Activated naive CD4-positive, alpha-beta T cell treated with anti-CD3 and anti-CD28 coated beads for 36 hours (primary cell): ENCODE measurements at regions of chr3 and their contacts with region 1.

Region 1: DNA sequence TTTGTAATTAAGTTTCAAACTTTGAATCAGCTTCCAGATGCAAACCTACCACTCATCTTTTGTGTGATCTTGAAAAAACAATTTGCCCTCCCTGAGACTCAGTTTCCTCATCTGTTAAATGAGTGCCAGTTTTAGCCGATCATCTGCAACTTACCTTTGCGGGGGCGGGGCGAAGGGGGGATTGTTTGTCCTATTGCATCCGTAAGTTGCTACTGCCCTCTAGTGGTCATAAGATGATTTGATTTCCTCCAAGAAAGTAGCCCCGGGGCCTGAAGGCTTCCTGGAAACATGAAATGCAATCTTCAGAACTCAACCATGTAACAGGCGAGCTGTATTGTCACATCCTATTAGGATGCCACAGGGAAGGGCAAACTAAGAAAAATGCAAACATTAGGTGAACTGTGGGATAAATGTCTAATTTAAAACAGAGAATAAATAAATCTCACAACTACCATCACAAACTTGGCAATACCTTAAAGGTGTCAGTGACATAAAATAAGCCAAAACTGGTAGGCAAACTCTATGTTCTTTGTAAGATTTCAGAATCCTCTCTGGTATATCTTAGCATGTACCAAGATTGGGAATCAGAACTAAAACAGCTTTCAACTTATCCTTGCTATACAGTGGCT is 63.5 kb upstream of the CLDN18 start:
- DNase-seq: peak; percentile 51
- H3K4me3 Mint-ChIP-seq: no peak overlapping the region
- H3K27ac Mint-ChIP-seq: no peak overlapping the region
- H3K4me1 Mint-ChIP-seq: peaks cover 3% of the 10 kb centered on the region
- H3K27me3 Mint-ChIP-seq: no peaks in the 10 kb centered on the region

Region 2: GRCh38 chr3:137032465-137033120 is 913.9 kb before region 1 on chr3:
- CTCF ChIA-PET with region 1: interaction called, 5 read pairs
- intact Hi-C with region 1: loop called (anchors 1 kb)
- DNase-seq: peak; percentile 91
- H3K4me3 Mint-ChIP-seq: peak overlapping the region; percentile 40
- H3K27ac Mint-ChIP-seq: no peak overlapping the region
- H3K4me1 Mint-ChIP-seq: peaks cover 7% of the 10 kb centered on the region
- H3K27me3 Mint-ChIP-seq: peaks cover 15% of the 10 kb centered on the region

Region 3: DNA sequence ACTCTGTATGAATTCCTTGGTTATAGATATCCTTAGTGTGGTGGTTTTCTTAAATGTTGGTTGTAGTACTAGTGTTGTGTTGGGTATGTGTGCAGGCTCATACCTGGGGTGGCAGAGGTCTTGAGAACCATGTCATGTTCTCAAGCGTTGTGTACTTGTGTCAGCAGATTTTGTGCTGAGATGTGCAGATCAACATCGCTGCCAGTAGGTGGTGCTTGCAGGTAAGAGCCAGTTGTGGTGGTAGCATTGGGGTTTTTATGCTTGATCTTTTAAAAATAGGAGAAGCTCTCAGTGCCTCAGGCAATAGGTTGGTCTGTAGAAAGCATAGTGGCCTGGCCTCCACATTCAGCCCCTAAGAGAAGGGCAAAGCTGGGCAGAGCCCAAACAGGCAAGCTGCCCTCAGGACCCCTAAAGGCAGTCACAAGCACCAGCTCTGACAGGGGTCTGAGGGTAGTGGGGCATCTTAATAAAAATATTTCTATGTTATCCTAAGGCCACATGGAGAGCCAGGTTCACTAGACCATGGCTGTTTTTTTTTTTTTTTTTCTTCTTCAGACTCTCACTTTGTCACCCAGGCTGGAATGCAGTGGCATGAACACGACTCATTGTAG is 824.6 kb before region 1 on chr3:
- CTCF ChIA-PET with region 1: interaction called, 4 read pairs
- intact Hi-C with region 1: loop called (anchors 5 kb)
- DNase-seq: peak; percentile 48
- H3K4me3 Mint-ChIP-seq: no peak overlapping the region
- H3K27ac Mint-ChIP-seq: no peak overlapping the region
- H3K4me1 Mint-ChIP-seq: no peaks in the 10 kb centered on the region
- H3K27me3 Mint-ChIP-seq: no peaks in the 10 kb centered on the region

Region 4: GRCh38 chr3:137709011-137709601 is 237.4 kb before region 1 on chr3:
- CTCF ChIA-PET with region 1: interaction called, 7 read pairs
- intact Hi-C with region 1: loop called (anchors 1 kb)
- DNase-seq: peak; percentile 6
- H3K4me3 Mint-ChIP-seq: no peak overlapping the region
- H3K27ac Mint-ChIP-seq: no peak overlapping the region
- H3K4me1 Mint-ChIP-seq: no peaks in the 10 kb centered on the region
- H3K27me3 Mint-ChIP-seq: no peaks in the 10 kb centered on the region

Region 5: DNA sequence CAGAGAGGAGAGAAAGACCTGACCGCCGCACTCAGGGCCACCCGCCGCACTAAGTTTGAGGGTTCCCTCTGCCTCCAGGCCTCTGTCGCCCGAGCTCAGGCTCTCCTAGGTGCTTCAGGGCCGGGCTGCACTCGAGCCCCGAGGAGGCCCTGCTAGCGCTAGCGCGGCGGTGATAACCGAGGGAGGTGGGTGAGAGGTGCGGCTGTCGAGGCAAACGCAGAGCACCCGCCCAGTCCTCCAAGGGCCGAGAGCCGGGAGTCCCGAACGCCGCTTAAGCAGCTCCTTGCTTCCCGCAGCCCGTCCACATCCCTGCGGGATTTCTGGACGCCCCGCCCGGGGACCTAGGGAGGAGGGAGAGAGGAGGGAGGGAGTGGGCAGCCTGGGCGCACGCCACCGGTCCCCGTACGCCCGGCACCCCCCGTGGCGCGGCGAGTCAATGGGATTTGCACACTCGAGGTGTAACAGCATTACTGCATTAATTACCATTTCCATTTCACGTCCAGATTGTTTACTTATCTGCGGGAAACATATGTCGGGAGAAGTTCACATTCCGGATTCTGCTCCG is 175.5 kb before region 1 on chr3:
- CTCF ChIA-PET with region 1: no interaction called
- intact Hi-C with region 1: loop called (anchors 10 kb)
- DNase-seq: no peak
- H3K4me3 Mint-ChIP-seq: peak overlapping the region; percentile 27
- H3K27ac Mint-ChIP-seq: no peak overlapping the region
- H3K4me1 Mint-ChIP-seq: peaks cover 21% of the 10 kb centered on the region
- H3K27me3 Mint-ChIP-seq: peaks cover 78% of the 10 kb centered on the region

Region 6: GRCh38 chr3:137792626-137793271 is 153.7 kb before region 1 on chr3:
- CTCF ChIA-PET with region 1: no interaction called
- intact Hi-C with region 1: loop called (anchors 5 kb)
- DNase-seq: peak; percentile 28
- H3K4me3 Mint-ChIP-seq: no peak overlapping the region
- H3K27ac Mint-ChIP-seq: no peak overlapping the region
- H3K4me1 Mint-ChIP-seq: no peaks in the 10 kb centered on the region
- H3K27me3 Mint-ChIP-seq: peaks cover 15% of the 10 kb centered on the region

Region 7: DNA sequence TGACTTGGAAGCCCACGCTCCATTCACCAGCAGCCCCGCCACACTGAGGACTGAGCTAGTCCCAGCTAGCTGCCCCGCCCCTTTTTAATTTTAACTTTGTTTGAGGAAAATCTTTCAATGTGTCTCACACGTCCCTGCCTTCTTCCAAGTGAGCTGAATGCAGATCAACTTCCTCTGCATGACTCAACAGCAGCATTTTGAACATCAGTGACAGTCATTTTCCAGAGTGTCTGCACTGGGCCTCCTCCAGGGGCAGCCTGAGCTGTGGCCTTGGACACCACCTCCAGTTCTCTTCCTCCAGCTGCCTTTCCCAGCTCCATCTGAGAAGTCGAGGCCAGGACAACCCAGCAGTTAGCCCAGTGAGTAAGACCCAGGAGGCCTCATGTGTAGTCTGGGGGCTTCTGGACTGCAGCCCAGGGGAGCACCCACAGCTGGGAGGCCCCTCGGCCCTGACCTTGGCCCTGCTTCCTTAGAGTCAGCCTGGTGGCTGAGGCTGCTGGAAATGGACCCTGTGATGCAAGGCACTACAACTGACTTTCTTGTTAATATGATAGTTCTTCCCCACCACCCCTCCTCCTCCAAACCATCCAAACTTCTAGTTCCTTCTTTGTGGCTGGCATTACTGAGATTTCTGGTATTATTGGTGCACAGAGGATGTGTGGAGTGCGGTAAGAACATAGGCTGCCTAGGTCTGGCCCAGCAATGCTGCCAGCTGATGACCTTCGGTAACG is 466.5 kb after region 1 on chr3:
- CTCF ChIA-PET with region 1: no interaction called
- intact Hi-C with region 1: no loop called
- DNase-seq: peak; percentile 34
- H3K4me3 Mint-ChIP-seq: no peak overlapping the region
- H3K27ac Mint-ChIP-seq: no peak overlapping the region
- H3K4me1 Mint-ChIP-seq: peaks cover 4% of the 10 kb centered on the region
- H3K27me3 Mint-ChIP-seq: peaks cover 6% of the 10 kb centered on the region